CD14-positive monocyte (primary cell): ENCODE measurements at regions of chr21 and their contacts with region 1.

Region 1: DNA sequence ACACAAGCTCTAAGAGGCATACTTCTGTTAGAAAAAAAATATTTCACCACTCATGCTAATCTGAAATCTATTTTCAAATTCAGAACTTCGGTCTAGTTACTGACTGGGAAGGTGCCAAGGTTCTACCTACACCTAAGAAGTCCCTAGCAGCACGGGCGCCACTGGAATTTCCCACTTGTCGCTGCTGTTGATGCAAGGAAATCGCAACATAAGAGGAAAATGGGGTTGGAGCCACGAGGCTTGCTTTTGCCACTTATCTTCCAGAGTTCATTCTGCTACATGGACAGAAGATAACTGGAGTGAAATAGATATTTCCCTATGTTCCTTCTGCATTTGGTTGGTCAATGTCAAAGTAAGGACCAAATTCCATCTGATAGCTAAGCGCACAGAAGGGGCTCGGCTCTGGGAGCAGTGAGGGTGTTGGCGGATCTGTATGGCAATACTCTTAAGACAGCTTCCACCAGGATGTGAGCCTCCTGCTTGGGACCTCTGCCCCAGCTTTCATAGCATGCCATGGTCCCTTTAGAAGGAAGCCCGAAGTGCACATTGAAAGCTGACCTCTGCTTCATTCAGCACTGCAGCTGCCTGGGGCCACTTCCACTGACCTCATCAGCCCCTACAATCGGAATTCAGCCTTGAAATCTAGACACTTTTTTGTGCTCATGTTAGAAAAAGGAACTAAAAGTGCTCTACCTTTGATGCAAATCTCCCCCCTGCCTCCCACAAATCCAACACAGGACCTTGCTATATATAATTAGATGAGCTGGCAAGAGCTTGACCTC is 47.1 kb downstream of the RCAN1 start:
- DNase-seq: no peak
- H3K4me3 ChIP-seq: no peak overlapping the region
- H3K4me3 Mint-ChIP-seq: no peak overlapping the region
- H3K27ac ChIP-seq: no peak overlapping the region
- H3K27ac Mint-ChIP-seq: peak overlapping the region in 2 of 7 donors; percentile 47 to 77
- H3K4me1 ChIP-seq: peaks cover 9 to 12% of the 10 kb centered on the region in 2 donors
- H3K4me1 Mint-ChIP-seq: peaks cover 21% of the 10 kb centered on the region
- H3K27me3 ChIP-seq: no peaks in the 10 kb centered on the region
- H3K27me3 Mint-ChIP-seq: no peaks in the 10 kb centered on the region
- CTCF ChIP-seq: no peak

Region 2: DNA sequence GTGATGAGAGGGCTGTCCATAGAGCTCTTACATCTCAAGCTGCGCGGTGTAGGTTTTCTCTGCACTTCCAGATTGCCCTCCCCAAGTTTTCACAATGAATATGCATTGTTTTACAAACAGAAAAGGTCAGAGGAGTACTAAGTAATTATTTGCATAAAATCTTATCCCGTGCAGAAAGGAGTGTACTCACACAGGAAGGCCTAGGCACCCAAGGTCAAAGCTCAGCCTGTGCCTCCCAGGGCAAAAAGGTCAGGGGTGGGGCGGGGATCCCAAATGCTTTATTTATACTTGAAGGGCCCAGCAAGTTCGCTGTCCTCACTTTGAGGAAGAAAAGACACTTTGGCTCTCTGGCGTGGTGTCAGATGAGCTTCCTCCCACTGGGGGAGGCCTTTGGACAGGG is 45.5 kb before region 1 on chr21:
- intact Hi-C with region 1: loop called in 1 of 2 experiments (anchors 2 kb)
- DNase-seq: no peak
- H3K4me3 ChIP-seq: peak overlapping the region in 1 of 3 experiments; percentile 6
- H3K4me3 Mint-ChIP-seq: peak overlapping the region; percentile 5 to 56
- H3K27ac ChIP-seq: peak overlapping the region; percentile 26 to 60
- H3K27ac Mint-ChIP-seq: peak overlapping the region; percentile 71 to 89 (median 82)
- H3K4me1 ChIP-seq: peaks cover 67 to 75% of the 10 kb centered on the region in 2 donors
- H3K4me1 Mint-ChIP-seq: peaks cover 72% of the 10 kb centered on the region
- H3K27me3 ChIP-seq: no peaks in the 10 kb centered on the region
- H3K27me3 Mint-ChIP-seq: peaks cover 0 to 2% (median 0%) of the 10 kb centered on the region in 3 donors
- CTCF ChIP-seq: no peak